ENCODE measurements at regions of chr17 and their contacts with region 1.

Region 1: GRCh38 chr17:7280519-7281429 is 744 bp upstream of the SLC2A4 start:
- DNase-seq: peak; percentile 82 to 86 (median 85)
- H3K4me3 ChIP-seq: peak overlapping the region; percentile 23 to 58
- H3K4me3 Mint-ChIP-seq: peak overlapping the region; percentile 77 to 90 (median 82)
- H3K27ac ChIP-seq: peak overlapping the region; percentile 41
- H3K27ac Mint-ChIP-seq: peak overlapping the region; percentile 36 to 84 (median 66)
- H3K4me1 ChIP-seq: peaks cover 25% of the 10 kb centered on the region
- H3K4me1 Mint-ChIP-seq: peaks cover 4 to 28% (median 18%) of the 10 kb centered on the region in 4 donors
- H3K27me3 ChIP-seq: peaks cover 10% of the 10 kb centered on the region
- H3K27me3 Mint-ChIP-seq: peaks cover 15 to 19% of the 10 kb centered on the region in 2 donors

Region 2: DNA sequence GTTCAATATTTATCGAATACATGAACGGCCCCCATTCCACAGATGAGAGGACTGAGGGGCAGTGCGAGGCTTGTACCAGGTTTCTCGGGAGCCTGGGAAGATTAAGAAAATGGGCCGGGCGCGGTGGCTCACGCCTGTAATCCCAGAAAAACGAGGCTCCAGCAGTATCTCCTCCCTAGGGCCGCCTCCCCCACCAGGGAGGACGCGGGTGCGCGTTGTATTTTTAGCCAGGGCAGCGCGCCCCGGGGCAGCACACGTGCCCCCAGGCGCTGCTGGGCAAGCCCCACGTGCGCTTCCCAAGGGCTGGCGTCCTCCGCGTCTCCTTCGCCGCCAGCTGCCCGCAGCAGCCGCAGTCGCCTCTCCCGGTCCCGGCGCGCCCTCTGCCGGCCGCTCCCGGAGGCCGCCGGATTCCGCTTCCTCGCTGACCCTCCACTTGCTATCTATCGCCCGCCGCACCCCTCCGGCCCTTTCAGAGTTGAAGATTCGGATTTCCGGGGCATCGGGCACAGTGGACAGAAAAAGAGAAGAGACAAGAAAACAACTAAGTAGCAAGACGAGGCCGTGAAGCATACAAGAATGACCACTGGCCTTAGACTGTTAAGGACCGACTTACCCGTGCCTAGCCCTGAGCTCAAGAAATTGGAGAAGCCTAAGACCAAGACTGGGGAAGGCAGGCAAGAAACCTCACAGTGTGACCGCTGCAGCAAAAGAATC is 15.6 kb after region 1 on chr17:
- CTCF ChIA-PET with region 1: interaction called, 26 read pairs
- POLR2A ChIA-PET with region 1: interaction called, 15 read pairs
- intact Hi-C with region 1: loop called (anchors 1 kb)
- DNase-seq: peak; percentile 41 to 62 (median 51)
- H3K4me3 ChIP-seq: no peak overlapping the region
- H3K4me3 Mint-ChIP-seq: peak overlapping the region in 6 of 8 donors; percentile 8 to 86 (median 50)
- H3K27ac ChIP-seq: no peak overlapping the region
- H3K27ac Mint-ChIP-seq: peak overlapping the region in 3 of 7 donors; percentile 55 to 60 (median 59)
- H3K4me1 ChIP-seq: peaks cover 26% of the 10 kb centered on the region
- H3K4me1 Mint-ChIP-seq: peaks cover 7 to 31% (median 18%) of the 10 kb centered on the region in 4 donors
- H3K27me3 ChIP-seq: no peaks in the 10 kb centered on the region
- H3K27me3 Mint-ChIP-seq: peaks cover 2 to 19% of the 10 kb centered on the region in 2 donors

Region 3: DNA sequence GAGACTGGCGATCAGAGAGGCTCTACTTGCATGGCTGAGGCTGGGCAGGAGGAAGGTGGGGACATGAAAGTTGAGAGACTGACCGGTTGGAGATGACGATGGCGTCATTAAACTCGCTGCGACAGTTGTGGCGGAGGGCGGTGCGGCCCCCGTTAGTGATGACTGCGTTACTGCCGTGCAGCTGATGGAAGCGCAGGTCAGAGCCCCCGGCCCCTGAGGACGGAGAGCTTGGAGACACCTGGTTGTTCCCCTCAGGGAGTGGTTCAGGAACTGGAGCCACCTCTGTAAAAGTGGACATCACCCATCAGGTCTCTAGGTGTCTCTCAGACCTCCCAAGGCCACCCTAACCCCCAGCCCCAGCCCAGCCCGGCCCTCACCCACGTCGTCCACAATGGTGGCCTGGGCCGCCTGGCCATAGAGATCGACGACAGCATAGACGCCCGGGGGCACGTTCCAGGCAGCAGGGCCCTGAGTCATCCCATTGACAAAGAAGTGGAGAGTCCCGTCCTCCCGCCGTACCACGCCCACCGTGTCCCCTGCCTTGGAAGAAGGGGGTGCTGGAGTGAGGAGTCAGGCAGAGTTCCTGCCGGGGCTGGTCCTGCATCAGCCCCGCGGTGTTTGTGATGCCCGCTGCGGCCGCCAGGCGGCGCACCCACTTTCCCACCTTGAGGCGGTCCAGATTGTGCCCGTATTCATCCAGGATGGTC is 43.1 kb after region 1 on chr17:
- CTCF ChIA-PET with region 1: no interaction called
- POLR2A ChIA-PET with region 1: no interaction called
- intact Hi-C with region 1: loop called (anchors 1 kb)
- DNase-seq: peak; percentile 50 to 72 (median 56)
- H3K4me3 ChIP-seq: no peak overlapping the region
- H3K4me3 Mint-ChIP-seq: no peak overlapping the region
- H3K27ac ChIP-seq: no peak overlapping the region
- H3K27ac Mint-ChIP-seq: peak overlapping the region in 3 of 7 donors; percentile 18 to 78 (median 55)
- H3K4me1 ChIP-seq: peaks cover 20% of the 10 kb centered on the region
- H3K4me1 Mint-ChIP-seq: peaks cover 17 to 28% (median 18%) of the 10 kb centered on the region in 4 donors
- H3K27me3 ChIP-seq: no peaks in the 10 kb centered on the region
- H3K27me3 Mint-ChIP-seq: no peaks in the 10 kb centered on the region

Region 4: GRCh38 chr17:7329374-7329996 is 48.7 kb after region 1 on chr17:
- CTCF ChIA-PET with region 1: no interaction called
- POLR2A ChIA-PET with region 1: interaction called, 3 read pairs
- intact Hi-C with region 1: loop called (anchors 1 kb)
- DNase-seq: peak; percentile 97 to 99 (median 97)
- H3K4me3 ChIP-seq: peak overlapping the region; percentile 94 to 99
- H3K4me3 Mint-ChIP-seq: peak overlapping the region; percentile 97 to 98 (median 98)
- H3K27ac ChIP-seq: peak overlapping the region; percentile 82
- H3K27ac Mint-ChIP-seq: peak overlapping the region; percentile 93 to 99 (median 98)
- H3K4me1 ChIP-seq: peaks cover 49% of the 10 kb centered on the region
- H3K4me1 Mint-ChIP-seq: peaks cover 32 to 58% (median 42%) of the 10 kb centered on the region in 4 donors
- H3K27me3 ChIP-seq: no peaks in the 10 kb centered on the region
- H3K27me3 Mint-ChIP-seq: no peaks in the 10 kb centered on the region